ENCODE measurements at regions of chr20 and their contacts with region 1.

Region 1: DNA sequence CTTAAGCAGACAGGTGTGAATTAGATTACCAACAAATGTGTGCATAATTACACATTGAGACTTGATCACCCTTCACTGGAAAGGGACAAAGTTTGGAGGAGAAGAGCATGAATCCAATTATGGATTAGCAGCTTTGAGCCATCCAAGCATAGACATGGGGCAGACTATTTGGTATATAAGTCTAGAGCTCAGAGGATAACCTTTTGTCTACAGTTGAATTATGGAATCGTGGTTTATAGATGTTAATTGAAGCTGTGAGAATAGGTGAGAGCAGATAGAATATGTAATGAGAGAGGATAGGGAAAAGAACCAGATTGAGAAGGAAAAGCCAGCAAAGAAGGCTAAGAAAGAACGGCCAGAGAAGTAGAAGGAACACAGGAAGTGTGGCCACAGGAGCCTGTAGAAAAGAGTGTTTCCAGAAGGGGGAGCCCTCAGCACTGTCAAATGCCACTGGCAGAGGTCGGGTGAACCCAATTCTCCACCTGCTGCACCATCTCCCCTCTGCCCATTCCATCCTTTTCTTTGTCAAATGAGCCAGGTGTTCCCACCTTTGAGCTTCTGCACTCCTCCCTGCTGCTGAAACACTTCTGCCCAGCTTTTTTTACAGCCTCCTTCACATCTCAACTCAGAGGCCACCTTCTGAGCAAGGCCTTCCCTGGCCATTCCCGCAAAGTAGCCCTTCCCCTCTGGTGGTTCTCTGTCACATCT is 7.3 kb downstream of the DNTTIP1 start:
- DNase-seq: peak; percentile 73
- H3K4me3 ChIP-seq: no peak overlapping the region
- H3K27ac ChIP-seq: peak overlapping the region; percentile 24 to 42 (median 30)
- H3K4me1 ChIP-seq: peaks cover 0 to 12% (median 4%) of the 10 kb centered on the region in 4 donors
- H3K27me3 ChIP-seq: no peaks in the 10 kb centered on the region
- CTCF ChIP-seq: peak; percentile 62 to 70 (median 64)
- EP300 ChIP-seq: no peak
- POLR2A ChIP-seq: no peak

Region 2: GRCh38 chr20:45890985-45891983 is 92.2 kb after region 1 on chr20 and contains the starts of genes CTSA and NEURL2:
- in situ Hi-C with region 1: no loop called
- intact Hi-C with region 1: loop called (anchors 10 kb)
- DNase-seq: peak; percentile 97
- H3K4me3 ChIP-seq: peak within 1 kb of the TSS; percentile 70 to 84 (median 76)
- H3K27ac ChIP-seq: peak within 1 kb of the TSS; percentile 87 to 90 (median 88)
- H3K4me1 ChIP-seq: peaks cover 15 to 41% (median 32%) of the 10 kb centered on the region in 4 donors
- H3K27me3 ChIP-seq: no peaks in the 10 kb centered on the region
- CTCF ChIP-seq: peak in 1 of 5 experiments; percentile 8
- EP300 ChIP-seq: peak; percentile 58
- POLR2A ChIP-seq: peak; percentile 73
- total RNA-seq, gene CTSA: 197 to 971 (median 466) TPM
- total RNA-seq, gene NEURL2: 14.7 to 30.4 (median 18.1) TPM

Region 3: DNA sequence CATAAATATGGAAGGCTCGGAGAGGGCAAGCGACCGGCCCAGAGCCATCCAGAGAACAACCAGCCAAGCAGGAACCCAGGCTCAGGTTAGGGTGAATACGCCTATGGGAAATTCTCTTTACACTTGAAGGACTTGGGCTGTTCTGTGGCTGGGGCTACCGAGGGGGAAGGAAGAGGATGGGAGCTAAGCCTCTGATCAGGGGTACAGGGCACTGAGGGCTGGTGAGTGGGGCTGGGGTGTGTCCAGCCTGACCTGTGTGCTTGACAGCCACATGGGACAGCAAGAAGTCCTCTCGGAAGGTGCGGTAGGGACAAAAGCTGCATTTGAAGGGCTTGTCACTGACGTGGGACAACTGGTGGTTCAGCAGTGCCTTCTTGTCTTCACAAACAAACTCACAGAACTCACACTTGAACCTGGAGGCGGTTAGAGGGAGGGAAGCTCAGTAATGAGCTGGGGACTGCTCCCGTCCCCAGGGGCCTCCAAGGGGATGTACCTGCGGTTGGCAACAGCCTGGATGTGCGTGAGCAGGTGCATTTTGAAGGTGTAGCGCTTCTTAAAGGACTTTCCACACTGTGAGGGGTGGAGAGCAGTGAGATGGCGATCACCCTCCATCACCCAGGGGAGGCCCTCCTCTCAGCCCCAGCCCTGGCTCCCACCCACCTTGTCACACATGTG is 161.0 kb after region 1 on chr20:
- in situ Hi-C with region 1: loop called in 2 of 4 experiments (anchors 10 to 25 kb)
- intact Hi-C with region 1: loop called (anchors 10 kb)
- DNase-seq: no peak
- H3K4me3 ChIP-seq: no peak overlapping the region
- H3K27ac ChIP-seq: no peak overlapping the region
- H3K4me1 ChIP-seq: no peaks in the 10 kb centered on the region
- H3K27me3 ChIP-seq: no peaks in the 10 kb centered on the region
- CTCF ChIP-seq: no peak
- EP300 ChIP-seq: no peak
- POLR2A ChIP-seq: no peak

Region 4: DNA sequence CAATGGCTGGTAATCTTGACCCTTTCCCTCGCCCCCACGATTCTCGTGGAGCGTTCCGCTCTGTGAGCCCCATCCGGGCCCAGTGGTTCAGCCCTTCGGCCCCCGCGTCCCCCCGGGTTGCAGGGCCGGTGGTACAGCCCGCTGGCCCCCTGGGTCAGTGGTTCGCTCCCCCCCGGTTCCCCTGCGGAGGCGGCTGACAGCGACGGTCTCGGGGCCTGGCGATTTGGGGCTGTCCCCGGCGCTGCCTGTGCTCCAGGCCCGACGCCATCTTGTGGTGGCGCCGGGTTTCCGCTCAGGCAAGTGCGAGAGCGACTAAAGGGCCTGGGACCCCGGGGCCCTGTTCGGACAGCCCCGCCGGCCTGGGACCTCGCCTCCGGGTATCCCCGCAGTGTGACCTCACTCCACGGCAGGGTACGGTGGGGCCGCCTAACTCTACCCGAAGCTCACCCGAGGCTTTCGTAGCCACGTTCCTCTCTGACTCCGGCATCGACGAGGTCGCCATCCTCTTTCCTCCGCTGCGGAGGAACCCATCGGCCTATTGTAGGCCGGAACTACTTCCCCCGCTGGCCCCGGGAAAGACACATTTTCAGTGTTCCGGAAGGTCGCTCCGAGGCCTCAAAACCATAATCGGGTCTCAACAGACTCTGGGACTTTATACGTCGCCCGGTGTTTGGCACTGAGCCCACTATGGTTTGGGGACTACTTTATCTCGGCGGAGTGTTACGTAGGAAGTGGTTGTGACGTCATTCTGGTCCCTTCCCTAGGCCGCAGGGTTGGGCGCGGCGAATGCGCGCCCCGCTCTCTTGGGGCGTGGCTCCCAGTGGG is 172.8 kb after region 1 on chr20 and contains the start of gene ZNF335:
- in situ Hi-C with region 1: loop called in 2 of 4 experiments (anchors 10 to 25 kb)
- intact Hi-C with region 1: no loop called
- DNase-seq: peak; percentile 95
- H3K4me3 ChIP-seq: peak within 1 kb of the TSS; percentile 56 to 96 (median 82)
- H3K27ac ChIP-seq: peak within 1 kb of the TSS; percentile 94 to 97 (median 96)
- H3K4me1 ChIP-seq: peaks cover 18 to 24% (median 22%) of the 10 kb centered on the region in 4 donors
- H3K27me3 ChIP-seq: no peaks in the 10 kb centered on the region
- CTCF ChIP-seq: peak in 4 of 5 experiments; percentile 44 to 83 (median 66)
- EP300 ChIP-seq: no peak
- POLR2A ChIP-seq: peak; percentile 89
- total RNA-seq, gene ZNF335: 27.0 to 80.0 (median 32.4) TPM